Ovary (tissue), 10 donors: ENCODE measurements at regions of chr20 and their contacts with region 1.

Region 1: GRCh38 chr20:40689943-40690835 is 1.2 kb upstream of the MAFB start:
- DNase-seq: peak; percentile 84 to 93 (median 90)
- H3K4me3 ChIP-seq: peak overlapping the region; percentile 59
- H3K27ac ChIP-seq: peak overlapping the region; percentile 61 to 92
- H3K4me1 ChIP-seq: peaks cover 9% of the 10 kb centered on the region
- H3K27me3 ChIP-seq: peaks cover 4% of the 10 kb centered on the region
- CTCF ChIP-seq: peak; percentile 79 to 83 (median 83)
- EP300 ChIP-seq: no peak
- POLR2A ChIP-seq: no peak

Region 2: DNA sequence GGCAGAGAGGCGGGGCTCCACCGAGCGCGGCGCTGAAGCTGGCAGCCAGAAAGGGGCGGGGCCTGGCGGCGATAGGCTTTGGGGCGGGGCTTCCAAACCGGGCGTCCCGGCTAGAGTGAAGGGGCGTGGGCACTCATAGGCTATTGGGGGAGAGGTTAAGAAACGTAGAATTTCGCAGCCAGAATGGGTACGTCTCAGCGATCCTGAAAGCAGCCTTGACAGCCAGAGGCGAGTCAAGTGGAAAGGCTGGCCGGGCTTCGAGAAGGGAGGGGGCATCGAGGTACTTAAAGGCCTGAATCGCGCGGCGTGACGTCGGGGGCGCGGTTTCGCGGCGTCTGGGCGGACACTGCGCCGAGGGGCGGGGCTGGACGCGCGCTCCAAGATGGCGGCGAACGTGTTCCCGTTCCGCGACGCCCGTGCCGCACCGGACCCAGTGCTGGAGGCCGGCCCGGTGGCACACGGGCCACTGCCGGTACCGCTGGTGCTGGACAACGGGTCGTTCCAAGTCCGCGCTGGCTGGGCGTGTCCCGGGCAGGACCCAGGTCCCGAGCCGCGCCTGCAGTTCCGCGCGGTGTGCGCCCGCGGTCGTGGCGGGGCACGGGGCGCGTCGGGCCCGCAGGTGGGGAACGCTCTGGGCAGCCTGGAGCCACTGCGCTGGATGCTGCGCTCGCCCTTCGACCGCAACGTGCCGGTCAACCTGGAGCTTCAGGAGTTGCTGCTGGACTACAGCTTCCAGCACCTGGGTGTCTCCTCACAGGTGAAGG is 1941.9 kb before region 1 on chr20 and contains the start of gene ACTR5:
- intact Hi-C with region 1: loop called in 1 of 4 experiments (anchors 10 kb)
- DNase-seq: peak; percentile 92 to 98 (median 96)
- H3K4me3 ChIP-seq: peak within 1 kb of the TSS; percentile 90
- H3K27ac ChIP-seq: peak within 1 kb of the TSS; percentile 38 to 96
- H3K4me1 ChIP-seq: peaks cover 5% of the 10 kb centered on the region
- H3K27me3 ChIP-seq: no peaks in the 10 kb centered on the region
- CTCF ChIP-seq: no peak
- EP300 ChIP-seq: peak; percentile 20
- POLR2A ChIP-seq: peak; percentile 36
- total RNA-seq, gene ACTR5: 6.2 to 12.3 (median 10.6) TPM

Region 3: DNA sequence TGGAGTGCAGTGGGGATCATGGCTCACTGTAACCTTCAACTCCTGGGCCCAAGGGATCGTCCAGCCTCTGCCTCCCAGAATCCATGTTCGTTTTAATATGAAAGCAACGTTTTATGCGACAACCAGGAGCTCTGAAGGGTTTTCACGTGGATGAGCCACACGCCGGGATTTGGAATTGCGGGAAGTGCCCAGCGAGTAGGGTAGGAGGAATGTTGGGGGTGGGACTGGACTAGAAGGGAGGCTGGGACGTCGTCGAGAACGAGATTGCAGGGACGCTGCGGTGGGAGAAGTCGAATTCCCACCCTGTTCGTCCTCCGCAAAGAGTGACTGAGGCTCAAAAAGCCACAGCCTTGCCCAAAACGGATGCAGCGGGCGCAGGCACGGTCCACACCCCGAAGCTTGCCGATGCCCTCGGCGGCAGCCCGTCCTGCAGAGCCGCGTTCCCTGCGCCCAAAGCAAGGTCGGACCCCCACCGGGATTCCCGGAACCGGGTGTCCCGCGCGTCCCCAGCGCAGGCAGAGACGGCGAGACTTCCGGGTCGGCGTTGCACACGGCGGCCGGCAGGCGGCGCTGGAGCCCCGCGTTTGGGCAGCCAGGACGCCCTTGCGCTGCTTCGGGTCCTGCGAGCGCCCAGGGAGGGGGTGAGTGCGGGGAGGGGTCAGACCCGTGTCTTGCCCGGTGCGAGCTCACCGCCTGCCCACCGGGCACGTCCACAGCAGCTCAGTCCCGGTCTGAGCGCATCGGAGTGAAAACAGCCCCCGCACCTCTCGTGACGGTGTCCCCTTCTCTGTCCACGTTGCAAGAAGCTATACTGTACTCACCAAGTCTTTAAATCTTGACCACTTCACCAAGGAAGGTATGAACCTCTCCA is 1640.3 kb before region 1 on chr20:
- intact Hi-C with region 1: loop called in 1 of 4 experiments (anchors 10 kb)
- DNase-seq: peak; percentile 63 to 84 (median 73)
- H3K4me3 ChIP-seq: peak overlapping the region; percentile 71
- H3K27ac ChIP-seq: no peak overlapping the region
- H3K4me1 ChIP-seq: no peaks in the 10 kb centered on the region
- H3K27me3 ChIP-seq: no peaks in the 10 kb centered on the region
- CTCF ChIP-seq: peak; percentile 86 to 92 (median 90)
- EP300 ChIP-seq: no peak
- POLR2A ChIP-seq: no peak

Region 4: GRCh38 chr20:39835130-39835842 is 854.9 kb before region 1 on chr20:
- intact Hi-C with region 1: loop called in 1 of 4 experiments (anchors 5 kb)
- DNase-seq: peak in 1 of 5 donors; percentile 23
- H3K4me3 ChIP-seq: no peak overlapping the region
- H3K27ac ChIP-seq: no peak overlapping the region
- H3K4me1 ChIP-seq: no peaks in the 10 kb centered on the region
- H3K27me3 ChIP-seq: no peaks in the 10 kb centered on the region
- CTCF ChIP-seq: no peak
- EP300 ChIP-seq: no peak
- POLR2A ChIP-seq: no peak

Region 5: DNA sequence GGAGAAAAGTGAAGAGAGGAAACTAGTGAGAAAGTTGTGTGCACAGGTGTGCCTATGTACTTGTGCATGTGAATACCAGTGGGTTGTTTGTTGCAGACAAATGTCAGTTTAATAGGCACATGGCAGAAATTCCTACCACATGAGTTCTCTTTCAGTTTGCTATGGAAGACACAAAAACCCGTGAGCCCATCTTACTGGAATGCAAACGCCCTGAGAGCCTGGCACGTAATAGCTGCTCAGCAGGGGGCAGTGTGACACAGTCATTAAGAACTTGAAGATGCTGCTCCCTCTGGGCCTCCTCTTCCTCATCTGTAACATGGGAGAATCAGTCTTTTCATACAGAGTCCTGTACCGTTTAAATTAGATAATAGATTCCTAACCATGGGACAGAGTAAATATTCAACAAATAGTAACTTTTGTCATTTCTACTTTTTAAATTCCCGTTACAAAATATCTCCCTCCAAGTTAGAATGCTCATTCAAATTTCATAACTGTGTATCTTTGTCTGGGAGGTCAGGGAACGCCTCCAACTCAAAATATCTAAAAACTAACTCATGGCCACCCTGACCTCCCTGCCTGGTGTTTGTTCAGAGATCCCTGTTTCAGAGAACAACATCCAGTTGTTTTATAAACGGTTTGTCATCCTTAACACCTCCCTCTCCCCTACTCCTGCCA is 804.1 kb before region 1 on chr20:
- intact Hi-C with region 1: loop called in 3 of 4 experiments (anchors 10 kb)
- DNase-seq: peak; percentile 22 to 73 (median 58)
- H3K4me3 ChIP-seq: no peak overlapping the region
- H3K27ac ChIP-seq: no peak overlapping the region
- H3K4me1 ChIP-seq: peaks cover 7% of the 10 kb centered on the region
- H3K27me3 ChIP-seq: no peaks in the 10 kb centered on the region
- CTCF ChIP-seq: peak in 1 of 3 donors; percentile 32
- EP300 ChIP-seq: no peak
- POLR2A ChIP-seq: no peak

Region 6: DNA sequence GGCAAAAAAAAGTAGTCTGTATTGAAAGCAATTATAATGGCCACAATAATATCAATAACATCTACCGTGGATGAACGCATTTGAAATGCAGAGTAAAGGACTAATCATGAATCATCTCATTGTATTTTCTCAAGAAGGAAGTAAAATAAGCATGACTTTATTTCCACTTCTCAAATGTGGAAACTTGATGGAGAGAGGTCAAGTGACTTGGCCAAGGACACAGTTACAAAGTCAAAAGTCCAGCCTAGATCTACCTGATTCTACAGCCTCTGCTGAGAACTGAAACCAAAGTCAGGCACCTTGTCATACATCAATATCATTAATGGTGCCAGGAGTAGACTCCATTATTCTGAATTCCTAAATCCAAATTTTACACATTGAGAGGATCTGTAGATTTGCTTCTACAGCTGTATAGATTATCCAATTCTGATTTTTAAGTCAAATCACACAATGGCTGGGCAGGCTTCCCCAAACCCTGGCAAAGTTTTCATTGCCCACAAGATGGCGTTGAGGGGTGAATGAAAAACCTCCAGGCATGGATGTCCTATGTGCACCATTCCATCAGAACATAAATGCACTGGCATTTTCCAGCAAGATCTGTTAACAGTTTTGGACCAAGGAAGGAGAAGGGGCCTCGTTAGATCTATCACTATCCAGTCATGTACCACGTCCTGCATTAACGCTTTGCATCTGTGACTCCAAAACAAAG is 424.2 kb before region 1 on chr20:
- intact Hi-C with region 1: loop called in 1 of 4 experiments (anchors 5 kb)
- DNase-seq: no peak
- H3K4me3 ChIP-seq: no peak overlapping the region
- H3K27ac ChIP-seq: no peak overlapping the region
- H3K4me1 ChIP-seq: no peaks in the 10 kb centered on the region
- H3K27me3 ChIP-seq: no peaks in the 10 kb centered on the region
- CTCF ChIP-seq: no peak
- EP300 ChIP-seq: no peak
- POLR2A ChIP-seq: no peak